GM13976 (cell line): ENCODE measurements at regions of chr5 and their contacts with region 1.

Region 1: GRCh38 chr5:81506900-81507588 is 113.1 kb upstream of the ACOT12 start:
- DNase-seq: peak; percentile 77
- CTCF ChIP-seq: peak; percentile 69

Region 2: DNA sequence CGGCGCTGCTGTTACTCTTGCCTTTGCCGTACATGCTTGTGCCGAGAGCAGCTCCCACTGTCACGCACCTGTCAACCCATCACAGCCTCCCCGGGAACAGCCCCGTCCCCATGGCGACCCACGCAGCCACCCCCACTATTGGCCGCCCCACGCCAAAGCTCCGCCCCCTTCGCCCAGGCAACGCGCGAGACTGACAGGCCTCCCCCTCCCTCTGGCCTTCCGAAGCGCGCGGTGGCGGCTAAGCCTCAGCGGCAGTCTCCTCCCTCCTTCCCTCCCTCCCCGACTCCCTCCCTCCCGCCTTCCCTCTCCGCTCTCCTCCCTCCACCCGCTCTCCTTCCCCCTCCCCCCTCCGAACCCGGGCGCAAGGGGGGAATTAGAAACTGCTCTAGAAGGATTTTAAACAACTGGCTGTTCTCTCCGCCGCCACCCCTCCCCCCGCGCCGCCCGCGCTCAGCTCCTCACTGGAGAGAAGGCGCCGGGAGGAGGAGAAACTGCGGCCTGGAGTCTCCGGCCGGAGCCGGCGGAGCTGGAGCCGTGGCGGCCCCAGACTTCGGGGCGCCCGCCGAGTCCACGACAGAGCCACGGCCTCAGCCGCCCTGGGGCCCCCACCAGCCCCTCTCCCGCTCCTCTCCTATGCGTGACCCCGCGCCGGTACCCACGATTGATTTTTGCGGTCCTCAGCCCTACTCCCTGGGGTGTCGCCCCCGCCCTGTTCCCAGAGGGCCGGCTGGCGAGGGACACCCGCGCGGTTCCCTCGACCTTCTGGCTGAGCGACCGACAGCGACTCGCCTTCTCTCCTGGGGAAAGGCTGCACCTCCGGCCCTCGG is 244.2 kb after region 1 on chr5 and contains the start of gene SSBP2:
- in situ Hi-C with region 1: loop called (anchors 10 kb)
- DNase-seq: peak; percentile 96
- CTCF ChIP-seq: no peak

Region 3: GRCh38 chr5:81848362-81848880 is 341.4 kb after region 1 on chr5:
- in situ Hi-C with region 1: loop called (anchors 10 kb)
- DNase-seq: no peak
- CTCF ChIP-seq: no peak

Region 4: GRCh38 chr5:82165740-82166530 is 658.9 kb after region 1 on chr5:
- in situ Hi-C with region 1: loop called (anchors 25 kb)
- DNase-seq: peak; percentile 31
- CTCF ChIP-seq: peak; percentile 46

Region 5: GRCh38 chr5:82225525-82226172 is 718.6 kb after region 1 on chr5:
- in situ Hi-C with region 1: no loop called
- DNase-seq: peak; percentile 58
- CTCF ChIP-seq: peak; percentile 58